ENCODE measurements at regions of chr6 and their contacts with region 1.

Region 1: DNA sequence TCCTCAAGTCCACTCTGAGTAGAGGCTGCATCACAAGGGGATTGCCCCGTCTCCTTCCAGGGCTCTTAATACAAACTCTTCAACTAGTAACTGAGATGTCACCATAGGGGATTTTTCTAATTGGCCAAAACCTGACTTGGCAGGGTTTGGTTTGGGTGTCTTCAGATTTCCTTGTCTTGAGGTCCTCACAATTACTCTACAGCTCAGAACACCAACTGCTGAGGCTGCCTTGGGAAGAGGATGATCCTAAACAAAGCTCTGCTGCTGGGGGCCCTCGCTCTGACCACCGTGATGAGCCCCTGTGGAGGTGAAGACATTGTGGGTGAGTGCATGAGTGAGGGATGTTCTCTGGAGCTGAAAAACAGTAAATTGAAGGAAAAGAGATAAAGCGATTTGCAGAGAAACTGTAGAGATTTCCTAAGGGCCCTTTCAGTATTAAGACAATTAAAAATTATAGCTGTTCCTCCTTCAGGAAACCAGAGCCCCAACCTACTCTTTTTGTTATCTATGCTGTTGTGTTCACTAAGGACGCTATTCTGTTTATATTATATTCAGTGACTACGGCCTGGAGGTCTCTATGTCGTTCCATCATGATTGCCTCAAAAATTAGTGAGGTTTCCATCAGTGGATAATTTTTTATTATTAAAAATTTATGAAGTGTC is at the start of gene HLA-DQA1:
- DNase-seq: peak; percentile 91
- ATAC-seq: peak; percentile 74
- H3K4me3 ChIP-seq: peak within 1 kb of the TSS; percentile 70
- H3K27ac ChIP-seq: peak within 1 kb of the TSS; percentile 95
- H3K4me1 ChIP-seq: peaks cover 12% of the 10 kb centered on the region
- H3K27me3 ChIP-seq: no peaks in the 10 kb centered on the region
- CTCF ChIP-seq: no peak
- EP300 ChIP-seq: no peak
- POLR2A ChIP-seq: peak; percentile 95
- RAD21 ChIP-seq: no peak
- polyA plus RNA-seq, gene HLA-DQA1: 327 to 423 TPM

Region 2: DNA sequence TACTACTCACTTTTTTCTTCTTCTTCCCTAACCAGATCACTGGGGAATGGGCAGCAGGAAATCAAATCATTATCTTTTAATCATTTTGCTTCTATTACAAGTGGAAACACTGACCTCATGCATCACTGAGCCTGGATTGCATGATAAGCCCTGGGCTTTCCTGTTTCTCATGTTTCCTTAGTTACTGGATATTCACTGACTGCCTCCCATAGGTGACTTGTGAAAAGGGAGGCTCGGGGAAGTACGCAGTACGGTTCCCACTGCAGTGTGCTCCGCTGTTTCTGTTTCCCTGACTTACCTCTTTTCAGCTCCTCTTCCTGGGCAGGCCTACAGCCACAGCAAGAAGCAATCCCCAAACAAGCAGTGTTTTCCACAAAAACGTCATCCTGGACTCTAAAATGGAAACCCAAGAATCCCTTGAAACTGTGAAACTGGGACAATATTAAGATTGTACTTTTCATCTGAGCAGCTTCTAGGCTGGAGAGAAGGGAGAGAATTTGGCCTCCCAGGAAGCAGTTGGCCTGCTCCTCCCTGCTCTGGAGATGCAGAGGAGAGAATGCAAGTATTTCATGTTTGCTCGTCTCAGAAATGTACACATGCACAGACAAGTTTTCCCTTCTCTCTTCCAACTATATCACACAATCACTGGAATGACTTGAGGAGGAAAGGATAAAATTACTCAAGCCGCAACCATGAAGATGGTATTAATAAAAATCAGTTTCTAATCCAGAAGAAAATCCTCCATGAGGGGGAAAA is 243.5 kb before region 1 on chr6:
- CTCF ChIA-PET with region 1: no interaction called
- POLR2A ChIA-PET with region 1: no interaction called
- RAD21 ChIA-PET with region 1: no interaction called
- SMC1A ChIA-PET with region 1: no interaction called
- in situ Hi-C with region 1: no loop called
- intact Hi-C with region 1: no loop called
- DNase-seq: no peak
- ATAC-seq: no peak
- H3K4me3 ChIP-seq: no peak overlapping the region
- H3K27ac ChIP-seq: no peak overlapping the region
- H3K4me1 ChIP-seq: peaks cover 8% of the 10 kb centered on the region
- H3K27me3 ChIP-seq: no peaks in the 10 kb centered on the region
- CTCF ChIP-seq: no peak
- EP300 ChIP-seq: no peak
- POLR2A ChIP-seq: no peak
- RAD21 ChIP-seq: no peak

Region 3: DNA sequence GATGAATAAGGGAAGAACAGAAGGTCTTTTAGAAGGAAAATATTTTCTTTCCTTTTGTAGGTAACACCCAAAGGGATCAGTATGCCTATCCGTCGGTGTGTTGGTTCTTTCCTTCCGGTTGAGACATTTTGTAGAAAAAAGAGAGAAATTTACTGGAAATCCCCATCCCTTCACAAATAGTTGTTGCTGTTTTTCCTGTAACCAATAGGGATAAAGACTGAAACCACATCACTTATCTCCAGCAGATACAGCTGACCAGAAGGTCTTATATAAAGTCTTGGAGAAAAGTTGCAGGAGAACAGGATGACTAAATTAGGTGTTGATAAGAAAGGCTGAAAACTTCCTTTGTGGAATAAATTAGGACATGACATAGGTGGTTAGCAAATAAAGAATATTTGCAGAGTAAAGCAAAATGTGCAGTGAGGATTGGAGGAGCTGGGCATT is 32.9 kb before region 1 on chr6:
- CTCF ChIA-PET with region 1: interaction called, 3 read pairs
- POLR2A ChIA-PET with region 1: interaction called, 27 read pairs
- RAD21 ChIA-PET with region 1: interaction called, 21 read pairs
- SMC1A ChIA-PET with region 1: interaction called, 21 read pairs
- in situ Hi-C with region 1: no loop called
- intact Hi-C with region 1: loop called (anchors 5 kb)
- DNase-seq: peak; percentile 82
- ATAC-seq: peak; percentile 73
- H3K4me3 ChIP-seq: no peak overlapping the region
- H3K27ac ChIP-seq: peak overlapping the region; percentile 95
- H3K4me1 ChIP-seq: peaks cover 9% of the 10 kb centered on the region
- H3K27me3 ChIP-seq: no peaks in the 10 kb centered on the region
- CTCF ChIP-seq: no peak
- EP300 ChIP-seq: peak in 1 of 2 experiments; percentile 62; a peak in 2 of 4 replicates
- POLR2A ChIP-seq: no peak
- RAD21 ChIP-seq: no peak

Region 4: GRCh38 chr6:32615885-32616532 is 21.3 kb before region 1 on chr6:
- CTCF ChIA-PET with region 1: interaction called, 3 read pairs
- POLR2A ChIA-PET with region 1: interaction called, 117 read pairs
- RAD21 ChIA-PET with region 1: interaction called, 102 read pairs
- SMC1A ChIA-PET with region 1: interaction called, 124 read pairs
- in situ Hi-C with region 1: no loop called
- intact Hi-C with region 1: loop called (anchors 2 kb)
- DNase-seq: no peak
- ATAC-seq: no peak
- H3K4me3 ChIP-seq: no peak overlapping the region
- H3K27ac ChIP-seq: no peak overlapping the region
- H3K4me1 ChIP-seq: peaks cover 6% of the 10 kb centered on the region
- H3K27me3 ChIP-seq: no peaks in the 10 kb centered on the region
- CTCF ChIP-seq: no peak
- EP300 ChIP-seq: no peak
- POLR2A ChIP-seq: no peak
- RAD21 ChIP-seq: no peak

Region 5: DNA sequence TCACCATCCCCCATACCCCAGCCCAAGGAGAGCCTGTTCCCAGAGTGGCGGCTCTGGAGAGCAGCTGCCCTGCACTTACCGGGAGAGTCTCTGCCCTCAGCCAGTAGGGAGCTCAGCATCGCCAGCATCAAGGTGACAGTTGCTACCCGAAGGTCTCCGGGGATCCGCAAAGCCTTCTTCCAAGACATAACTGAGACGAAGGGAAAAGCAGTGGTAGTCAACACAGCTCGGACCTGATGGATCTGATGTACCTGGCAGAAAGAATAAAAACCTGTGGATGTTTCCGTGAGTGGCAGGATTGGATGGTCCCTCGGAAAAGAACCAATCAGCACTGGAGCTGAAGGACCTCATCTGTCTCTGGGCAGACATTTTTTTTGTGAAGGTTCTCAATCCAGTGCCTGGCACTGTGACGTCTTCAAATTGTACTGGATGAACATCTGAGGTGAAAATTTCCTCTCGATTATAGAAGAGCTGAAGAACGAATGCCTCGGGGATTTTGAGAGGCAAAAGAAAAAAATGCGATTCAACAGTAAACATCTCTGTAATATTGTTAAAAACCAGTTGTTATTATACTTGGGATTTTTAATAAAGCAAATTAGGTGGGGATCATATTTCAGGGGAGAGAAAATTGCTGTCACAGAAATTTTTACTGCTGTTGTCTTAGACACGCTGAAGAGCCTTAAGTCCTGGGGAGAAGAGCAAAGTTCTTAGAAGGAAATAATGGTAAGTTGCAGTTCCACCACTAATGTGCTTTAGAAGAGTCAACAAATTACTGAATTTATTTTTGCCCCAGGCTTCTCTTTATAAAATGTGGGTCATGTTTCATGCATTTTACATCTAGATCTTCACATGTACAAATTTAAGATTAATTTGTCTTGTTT is 29.3 kb after region 1 on chr6 and contains the start of gene HLA-DQB1:
- CTCF ChIA-PET with region 1: interaction called, 5 read pairs
- POLR2A ChIA-PET with region 1: interaction called, 168 read pairs
- RAD21 ChIA-PET with region 1: interaction called, 14 read pairs
- SMC1A ChIA-PET with region 1: interaction called, 20 read pairs
- in situ Hi-C with region 1: no loop called
- intact Hi-C with region 1: no loop called
- DNase-seq: peak; percentile 77
- ATAC-seq: peak; percentile 70
- H3K4me3 ChIP-seq: peak within 1 kb of the TSS; percentile 55; the same call in 1 of the 2 replicates
- H3K27ac ChIP-seq: peak within 1 kb of the TSS; percentile 92
- H3K4me1 ChIP-seq: peaks cover 22% of the 10 kb centered on the region
- H3K27me3 ChIP-seq: no peaks in the 10 kb centered on the region
- CTCF ChIP-seq: no peak
- EP300 ChIP-seq: no peak
- POLR2A ChIP-seq: peak; percentile 72
- RAD21 ChIP-seq: no peak
- polyA plus RNA-seq, gene HLA-DQB1: 38.1 to 66.1 TPM

Region 6: DNA sequence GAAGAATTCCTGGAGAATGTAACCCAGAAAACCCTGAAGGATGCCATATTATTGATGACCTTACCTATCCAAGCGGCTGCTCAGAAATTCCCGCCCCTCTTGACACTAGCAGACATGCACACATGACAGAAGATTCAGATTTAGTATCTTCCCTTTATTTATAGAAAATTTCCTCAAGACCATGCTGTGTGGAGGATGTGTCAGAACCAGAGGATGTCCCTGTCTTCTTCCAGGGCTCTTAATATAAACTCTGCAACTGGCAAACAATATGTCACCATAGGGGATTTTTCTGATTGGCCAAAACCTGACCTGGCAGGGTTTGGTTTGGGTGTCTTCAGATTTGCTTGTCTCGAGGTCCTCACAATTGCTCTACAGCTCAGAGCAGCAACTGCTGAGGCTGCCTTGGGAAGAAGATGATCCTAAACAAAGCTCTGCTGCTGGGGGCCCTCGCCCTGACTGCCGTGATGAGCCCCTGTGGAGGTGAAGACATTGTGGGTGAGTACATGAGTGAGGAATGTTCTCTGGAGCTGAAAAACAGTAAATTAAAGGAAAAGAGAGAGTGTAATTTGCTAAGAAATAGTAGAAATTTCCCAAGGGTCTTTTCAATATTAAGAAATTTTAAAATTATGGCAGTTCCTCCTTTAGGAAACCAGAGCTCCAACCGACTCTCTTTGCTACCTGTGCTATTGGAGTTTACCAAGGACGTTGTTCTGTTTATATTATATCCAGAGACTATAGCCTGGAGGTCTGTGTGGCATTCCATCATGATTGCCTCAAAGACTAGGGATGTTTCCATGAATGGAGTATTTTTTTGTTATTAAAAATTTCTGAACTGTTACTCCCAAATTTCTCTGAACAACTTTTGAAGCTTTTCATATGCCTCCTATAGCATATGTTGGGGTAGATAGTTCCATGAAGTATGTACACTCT is 103.9 kb after region 1 on chr6 and contains the start of gene HLA-DQA2:
- CTCF ChIA-PET with region 1: no interaction called
- POLR2A ChIA-PET with region 1: interaction called, 4 read pairs
- RAD21 ChIA-PET with region 1: interaction called, 4 read pairs
- SMC1A ChIA-PET with region 1: no interaction called
- in situ Hi-C with region 1: loop called (anchors 5 kb)
- intact Hi-C with region 1: no loop called
- DNase-seq: no peak
- ATAC-seq: peak; percentile 72
- H3K4me3 ChIP-seq: no peak within 1 kb of the TSS
- H3K27ac ChIP-seq: no peak within 1 kb of the TSS
- H3K4me1 ChIP-seq: no peaks in the 10 kb centered on the region; the same call in 1 of the 2 replicates
- H3K27me3 ChIP-seq: peaks cover 0 to 4% of the 10 kb centered on the region in 2 experiments; a peak in 2 of 4 replicates
- CTCF ChIP-seq: no peak
- EP300 ChIP-seq: no peak
- POLR2A ChIP-seq: no peak
- RAD21 ChIP-seq: no peak
- polyA plus RNA-seq, gene HLA-DQA2: 17.2 to 21.8 TPM

Measured in GM12878 (cell line).